Activated naive CD4-positive, alpha-beta T cell treated with anti-CD3 and anti-CD28 coated beads for 36 hours (primary cell): ENCODE measurements at regions of chr17 and their contacts with region 1.

Region 1: DNA sequence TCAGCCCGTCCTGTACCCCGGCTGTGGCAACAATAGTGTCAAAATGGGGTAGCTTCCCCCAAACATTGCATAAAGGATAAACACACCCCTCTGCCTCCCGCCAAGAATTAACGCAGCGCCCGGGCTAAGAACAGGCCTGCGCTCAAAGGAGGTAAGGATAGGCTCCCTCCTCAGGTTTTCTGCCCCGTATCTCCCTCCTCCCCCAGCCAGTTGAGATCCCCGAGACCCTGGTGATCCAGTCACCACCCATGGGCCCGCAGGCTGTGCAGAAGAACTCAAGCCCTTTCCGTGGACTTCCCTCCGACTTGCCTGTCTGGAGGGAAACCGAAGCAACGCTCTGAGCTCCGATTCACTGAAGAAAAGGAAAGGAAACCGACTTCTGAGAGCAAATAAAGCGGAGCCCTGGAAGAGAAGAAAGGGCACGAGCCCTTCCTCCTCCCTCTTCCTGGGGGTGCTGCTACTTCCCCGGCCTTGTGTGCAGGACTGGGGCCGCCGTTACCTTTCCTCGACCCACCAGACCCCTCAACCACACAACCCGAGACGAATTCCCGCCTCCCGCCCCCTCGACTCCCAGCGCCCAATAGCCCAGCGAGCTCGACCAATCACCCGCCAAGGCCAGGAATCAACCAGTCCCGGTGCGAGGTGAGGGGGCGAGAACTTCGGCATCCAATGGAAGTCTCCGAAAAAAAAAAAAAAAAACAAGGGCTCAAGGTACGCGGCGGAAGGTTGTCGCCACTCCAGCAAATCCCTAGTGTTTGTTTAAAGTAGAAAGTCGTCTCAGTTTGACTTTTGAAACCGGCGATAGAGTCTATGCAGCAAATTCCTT is at the start of gene BRIP1:
- DNase-seq: peak; percentile 95
- H3K4me3 Mint-ChIP-seq: peak within 1 kb of the TSS; percentile 99
- H3K27ac Mint-ChIP-seq: peak within 1 kb of the TSS; percentile 89
- H3K4me1 Mint-ChIP-seq: peaks cover 22% of the 10 kb centered on the region
- H3K27me3 Mint-ChIP-seq: no peaks in the 10 kb centered on the region
- total RNA-seq, gene BRIP1: 12.0 to 12.9 TPM

Region 2: DNA sequence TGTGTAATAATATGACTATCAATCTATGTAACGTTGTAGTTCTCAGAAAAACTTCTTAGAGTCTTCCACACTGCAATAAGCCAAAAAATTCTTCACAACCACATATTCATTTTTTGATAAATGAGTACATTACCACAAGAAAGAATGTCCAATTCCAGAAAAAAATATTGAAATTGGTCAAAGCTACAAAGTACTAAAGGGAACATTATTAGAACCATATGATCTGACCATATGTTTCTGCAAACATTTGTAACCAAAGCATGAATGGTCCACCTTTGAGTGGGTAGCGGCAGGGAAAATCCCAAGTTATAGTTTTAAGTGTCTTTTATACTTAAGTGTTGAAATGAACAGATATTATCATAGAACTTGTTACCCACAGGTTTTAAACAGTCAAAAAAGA is 200.4 kb before region 1 on chr17:
- CTCF ChIA-PET with region 1: no interaction called
- intact Hi-C with region 1: no loop called
- DNase-seq: no peak
- H3K4me3 Mint-ChIP-seq: no peak overlapping the region
- H3K27ac Mint-ChIP-seq: no peak overlapping the region
- H3K4me1 Mint-ChIP-seq: no peaks in the 10 kb centered on the region
- H3K27me3 Mint-ChIP-seq: peaks cover 13% of the 10 kb centered on the region

Region 3: GRCh38 chr17:61927200-61928165 is 64.3 kb after region 1 on chr17 and contains the start of gene INTS2:
- CTCF ChIA-PET with region 1: no interaction called
- intact Hi-C with region 1: loop called (anchors 1 kb)
- DNase-seq: peak; percentile 97
- H3K4me3 Mint-ChIP-seq: peak within 1 kb of the TSS; percentile 95
- H3K27ac Mint-ChIP-seq: peak within 1 kb of the TSS; percentile 89
- H3K4me1 Mint-ChIP-seq: peaks cover 17% of the 10 kb centered on the region
- H3K27me3 Mint-ChIP-seq: no peaks in the 10 kb centered on the region
- total RNA-seq, gene INTS2: 23.2 to 25.0 TPM